ENCODE measurements at regions of chr3 and their contacts with region 1.

Region 1: GRCh38 chr3:107522510-107523288 is at the start of gene BBX:
- DNase-seq: peak; percentile 95 to 96
- ATAC-seq: peak; percentile 83 to 96 (median 88)
- H3K4me3 ChIP-seq: peak within 1 kb of the TSS; percentile 55
- H3K4me3 Mint-ChIP-seq: peak within 1 kb of the TSS; percentile 99
- H3K27ac ChIP-seq: peak within 1 kb of the TSS; percentile 80
- H3K27ac Mint-ChIP-seq: peak within 1 kb of the TSS; percentile 86 to 88
- H3K4me1 ChIP-seq: peaks cover 13% of the 10 kb centered on the region
- H3K4me1 Mint-ChIP-seq: peaks cover 20 to 24% of the 10 kb centered on the region in 2 donors
- H3K27me3 ChIP-seq: no peaks in the 10 kb centered on the region
- H3K27me3 Mint-ChIP-seq: peaks cover 0 to 5% of the 10 kb centered on the region in 2 donors
- CTCF ChIP-seq: no peak
- total RNA-seq, gene BBX: 80.0 to 87.1 (median 83.4) TPM

Region 2: DNA sequence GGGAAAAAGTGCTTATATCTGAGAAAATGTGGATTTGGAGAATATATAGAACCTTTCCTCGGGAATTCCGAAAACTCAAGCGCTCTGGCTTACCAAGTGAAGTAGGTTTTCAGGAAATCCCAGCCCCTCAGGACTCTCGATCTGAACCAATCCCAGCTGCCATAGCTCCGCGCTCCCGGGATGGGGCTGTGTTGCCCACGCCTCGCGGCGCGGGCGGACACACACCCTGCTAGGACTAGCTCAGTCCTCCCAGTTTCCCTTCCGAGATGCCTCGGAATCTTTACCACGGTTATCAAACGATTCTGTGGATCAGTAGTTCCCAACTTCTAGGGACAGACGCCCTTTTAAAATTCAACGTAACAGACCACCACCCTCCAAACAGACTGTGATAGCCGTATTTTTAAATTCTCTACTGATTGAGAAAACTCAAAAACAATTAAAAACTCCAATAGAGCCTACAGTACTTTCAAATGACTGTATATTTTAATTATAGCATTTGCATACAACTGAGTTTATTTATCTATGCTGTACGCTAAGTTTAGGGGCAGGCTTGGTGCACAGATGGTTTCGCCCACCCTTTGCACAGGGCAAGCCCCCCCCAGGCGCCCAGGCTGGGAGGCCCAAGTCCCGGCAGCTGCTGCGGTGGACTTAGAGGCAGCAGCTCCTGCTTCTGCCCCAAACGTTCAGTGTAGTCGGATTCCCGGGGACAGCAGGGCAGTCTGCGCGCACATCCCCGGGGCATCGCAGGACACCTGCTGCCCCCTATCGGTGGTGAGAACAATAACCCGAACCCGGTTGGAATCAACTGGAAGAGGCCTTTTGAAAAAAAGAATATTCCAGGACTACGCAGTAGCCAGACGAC is 93.1 kb before region 1 on chr3:
- intact Hi-C with region 1: loop called (anchors 5 kb)
- DNase-seq: peak; percentile 40 to 82
- ATAC-seq: peak; percentile 65 to 74 (median 71)
- H3K4me3 ChIP-seq: peak overlapping the region; percentile 73
- H3K4me3 Mint-ChIP-seq: peak overlapping the region; percentile 88
- H3K27ac ChIP-seq: no peak overlapping the region
- H3K27ac Mint-ChIP-seq: no peak overlapping the region
- H3K4me1 ChIP-seq: peaks cover 24% of the 10 kb centered on the region
- H3K4me1 Mint-ChIP-seq: peaks cover 14% of the 10 kb centered on the region in 2 donors
- H3K27me3 ChIP-seq: peaks cover 10% of the 10 kb centered on the region
- H3K27me3 Mint-ChIP-seq: peaks cover 15 to 35% of the 10 kb centered on the region in 2 donors
- CTCF ChIP-seq: peak; percentile 76

Region 3: DNA sequence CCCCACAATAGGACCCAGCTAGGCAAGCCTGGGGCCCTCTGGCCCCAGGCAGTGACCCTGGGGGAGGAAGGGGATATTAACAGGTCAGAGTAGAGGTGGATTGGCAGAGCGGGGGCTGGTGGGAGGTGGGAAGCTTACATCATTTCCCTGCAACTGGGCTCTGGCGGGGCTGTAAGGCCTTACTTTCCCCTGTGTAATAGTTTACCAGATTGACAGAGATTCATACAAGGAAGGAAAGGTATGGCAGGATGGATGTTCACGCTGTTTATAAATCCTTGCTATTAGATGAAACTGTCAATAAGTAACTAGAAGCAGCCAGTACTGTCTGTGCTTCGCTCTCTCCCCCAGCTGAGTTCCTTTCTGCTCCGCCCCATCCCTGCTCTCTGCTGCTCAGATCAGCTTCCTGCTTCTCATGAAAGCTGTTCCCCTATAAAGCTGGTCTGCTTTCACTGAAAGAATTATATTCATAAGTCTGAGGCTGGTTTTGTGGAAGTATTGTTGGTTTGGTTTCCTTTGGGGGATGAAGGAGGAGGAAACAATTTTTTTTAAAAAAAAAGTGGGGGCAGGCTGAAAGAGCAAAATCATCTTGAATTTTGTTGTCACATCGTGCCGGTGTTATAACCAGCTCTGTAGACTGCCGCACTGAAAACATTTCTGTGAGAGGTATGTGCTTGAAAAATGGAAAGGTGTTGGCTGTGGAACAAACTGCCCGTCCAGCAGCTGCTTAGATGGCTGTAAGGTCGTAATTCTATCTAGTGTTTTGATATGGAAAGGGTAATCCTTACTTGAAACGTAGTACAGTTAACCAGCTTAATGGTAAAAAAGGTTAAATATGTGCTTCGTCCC is 76.5 kb after region 1 on chr3:
- intact Hi-C with region 1: loop called (anchors 2 kb)
- DNase-seq: peak; percentile 29 to 69
- ATAC-seq: peak; percentile 81 to 89 (median 85)
- H3K4me3 ChIP-seq: peak overlapping the region; percentile 36
- H3K4me3 Mint-ChIP-seq: peak overlapping the region; percentile 84
- H3K27ac ChIP-seq: peak overlapping the region; percentile 84
- H3K27ac Mint-ChIP-seq: peak overlapping the region; percentile 89 to 98
- H3K4me1 ChIP-seq: peaks cover 12% of the 10 kb centered on the region
- H3K4me1 Mint-ChIP-seq: peaks cover 45 to 59% of the 10 kb centered on the region in 2 donors
- H3K27me3 ChIP-seq: no peaks in the 10 kb centered on the region
- H3K27me3 Mint-ChIP-seq: no peaks in the 10 kb centered on the region
- CTCF ChIP-seq: no peak

Region 4: DNA sequence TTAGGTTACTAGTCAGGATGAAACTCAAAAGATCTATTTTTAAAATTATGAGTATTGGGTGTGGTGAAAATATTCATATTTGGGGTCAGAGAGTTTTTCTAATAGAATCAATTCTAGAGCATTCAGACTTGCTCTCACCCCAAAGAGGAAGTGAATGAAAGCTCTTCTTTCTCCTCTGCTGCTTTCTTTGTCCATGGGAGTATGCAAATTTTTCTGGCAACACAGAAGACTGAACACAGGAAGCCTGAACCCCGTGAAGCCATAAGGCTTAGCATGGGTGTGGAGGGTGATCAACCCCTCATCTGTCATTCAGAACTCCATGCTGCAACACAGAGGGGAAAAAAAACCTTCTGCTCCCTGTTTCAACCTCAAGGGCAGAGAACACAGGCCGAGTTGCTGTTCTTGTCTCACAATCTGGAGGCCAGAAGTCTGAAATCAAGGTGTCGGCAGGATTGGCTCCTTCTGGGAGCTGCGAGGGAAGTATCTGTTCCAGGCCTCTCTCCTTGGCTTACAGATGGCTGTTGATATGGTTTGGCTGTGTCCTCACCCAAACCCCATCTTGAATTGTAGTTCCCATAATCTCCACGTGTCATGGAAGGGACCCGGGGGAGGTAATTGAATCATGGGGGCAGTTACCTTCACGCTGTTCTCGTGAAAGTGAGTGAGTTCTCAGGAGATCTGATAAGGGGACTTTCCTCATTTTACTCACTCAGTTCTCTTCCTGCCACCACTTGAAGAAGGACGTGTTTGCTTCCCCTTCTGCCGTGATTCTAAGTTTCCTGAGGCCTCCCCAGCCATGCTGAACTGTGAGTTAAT is 601.8 kb after region 1 on chr3:
- intact Hi-C with region 1: loop called (anchors 10 kb)
- DNase-seq: peak; percentile 32 to 89
- ATAC-seq: peak; percentile 63 to 78 (median 63)
- H3K4me3 ChIP-seq: peak overlapping the region; percentile 42
- H3K4me3 Mint-ChIP-seq: peak overlapping the region; percentile 79
- H3K27ac ChIP-seq: peak overlapping the region; percentile 97
- H3K27ac Mint-ChIP-seq: peak overlapping the region; percentile 93 to 97
- H3K4me1 ChIP-seq: peaks cover 60% of the 10 kb centered on the region
- H3K4me1 Mint-ChIP-seq: peaks cover 61 to 63% of the 10 kb centered on the region in 2 donors
- H3K27me3 ChIP-seq: no peaks in the 10 kb centered on the region
- H3K27me3 Mint-ChIP-seq: no peaks in the 10 kb centered on the region
- CTCF ChIP-seq: no peak

Region 5: DNA sequence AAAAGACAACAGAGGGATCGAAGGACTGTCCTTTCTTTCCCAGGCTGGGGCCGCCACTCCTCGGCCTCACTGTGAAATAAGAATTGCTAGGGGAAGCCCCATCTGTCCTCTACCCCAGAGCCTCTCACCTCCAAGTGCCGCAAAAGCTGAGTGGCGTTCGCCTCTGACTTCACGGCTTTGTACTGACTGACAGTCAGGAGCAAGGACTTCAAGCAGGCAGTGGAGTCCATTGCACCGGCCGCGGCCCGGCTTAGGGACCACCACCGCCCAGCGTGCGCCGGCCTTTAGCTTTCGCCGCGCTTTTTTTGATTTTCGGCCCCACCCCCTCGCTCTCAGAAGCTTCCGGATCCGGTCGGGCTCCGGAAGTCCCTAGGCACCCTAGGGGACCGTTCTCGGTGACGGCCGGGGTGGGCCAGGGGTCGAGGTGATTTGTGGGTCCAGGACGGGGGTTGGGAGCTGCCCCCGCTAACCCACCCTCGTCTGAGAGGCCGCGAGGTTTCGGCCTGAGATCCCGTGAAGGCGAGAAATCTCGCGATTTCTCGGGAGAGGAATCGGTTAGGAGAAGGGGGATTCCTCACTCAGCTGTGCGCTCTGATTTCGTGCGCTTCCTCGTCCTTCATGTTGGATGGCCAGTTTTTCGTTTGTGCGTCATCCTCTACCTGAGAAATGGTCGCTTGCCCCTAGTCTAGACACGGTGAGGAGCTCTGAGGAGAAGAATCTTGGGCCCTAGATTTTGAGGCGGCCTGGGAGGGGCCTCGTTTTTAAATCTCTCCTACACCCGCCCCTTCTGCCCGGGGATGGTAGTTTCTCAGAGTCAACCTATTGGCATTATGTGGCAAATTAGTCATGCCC is 1066.7 kb after region 1 on chr3 and contains the starts of genes CIP2A and DZIP3:
- intact Hi-C with region 1: loop called (anchors 1 kb)
- DNase-seq: peak; percentile 84 to 95
- ATAC-seq: peak; percentile 77 to 91 (median 80)
- H3K4me3 ChIP-seq: peak within 1 kb of the TSS; percentile 95
- H3K4me3 Mint-ChIP-seq: peak within 1 kb of the TSS; percentile 97
- H3K27ac ChIP-seq: peak within 1 kb of the TSS; percentile 98
- H3K27ac Mint-ChIP-seq: peak within 1 kb of the TSS; percentile 95 to 99
- H3K4me1 ChIP-seq: peaks cover 8% of the 10 kb centered on the region
- H3K4me1 Mint-ChIP-seq: peaks cover 28 to 34% of the 10 kb centered on the region in 2 donors
- H3K27me3 ChIP-seq: no peaks in the 10 kb centered on the region
- H3K27me3 Mint-ChIP-seq: no peaks in the 10 kb centered on the region
- CTCF ChIP-seq: no peak
- total RNA-seq, gene CIP2A: 3.6 to 8.5 (median 3.6) TPM
- total RNA-seq, gene DZIP3: 12.0 to 24.8 (median 20.8) TPM

Measured in natural killer cell (primary cell).